ENCODE measurements at regions of chr18 and their contacts with region 1.

Region 1: DNA sequence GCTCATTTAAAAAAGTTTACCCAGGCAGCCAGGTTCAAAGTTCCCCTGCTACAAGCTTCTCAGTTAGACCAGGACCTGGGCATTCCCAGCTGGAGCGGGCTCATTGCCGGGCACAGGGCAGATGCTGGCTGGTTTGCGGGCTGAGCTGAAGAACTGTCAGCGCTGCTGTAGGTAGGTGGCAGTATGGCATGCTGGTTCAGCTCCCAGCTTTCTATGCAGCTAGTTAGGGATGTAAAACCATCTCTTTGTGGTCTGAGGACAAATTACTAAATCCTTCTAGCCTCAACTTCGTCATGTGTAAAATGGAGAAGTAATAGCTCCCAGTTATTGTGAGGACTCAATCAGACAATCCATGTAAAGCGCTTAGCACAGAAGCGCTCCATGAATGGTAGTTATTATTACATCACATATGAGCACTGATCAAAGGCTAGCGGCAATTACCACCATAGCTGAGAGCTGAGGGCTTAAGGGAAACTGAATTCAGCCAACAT is 2.4 kb upstream of the LDLRAD4 start:
- DNase-seq: peak; percentile 79
- ATAC-seq: peak; percentile 70
- H3K4me3 Mint-ChIP-seq: peak overlapping the region; percentile 77
- H3K27ac Mint-ChIP-seq: no peak overlapping the region
- H3K4me1 Mint-ChIP-seq: peaks cover 27% of the 10 kb centered on the region
- H3K27me3 Mint-ChIP-seq: peaks cover 15% of the 10 kb centered on the region

Region 2: DNA sequence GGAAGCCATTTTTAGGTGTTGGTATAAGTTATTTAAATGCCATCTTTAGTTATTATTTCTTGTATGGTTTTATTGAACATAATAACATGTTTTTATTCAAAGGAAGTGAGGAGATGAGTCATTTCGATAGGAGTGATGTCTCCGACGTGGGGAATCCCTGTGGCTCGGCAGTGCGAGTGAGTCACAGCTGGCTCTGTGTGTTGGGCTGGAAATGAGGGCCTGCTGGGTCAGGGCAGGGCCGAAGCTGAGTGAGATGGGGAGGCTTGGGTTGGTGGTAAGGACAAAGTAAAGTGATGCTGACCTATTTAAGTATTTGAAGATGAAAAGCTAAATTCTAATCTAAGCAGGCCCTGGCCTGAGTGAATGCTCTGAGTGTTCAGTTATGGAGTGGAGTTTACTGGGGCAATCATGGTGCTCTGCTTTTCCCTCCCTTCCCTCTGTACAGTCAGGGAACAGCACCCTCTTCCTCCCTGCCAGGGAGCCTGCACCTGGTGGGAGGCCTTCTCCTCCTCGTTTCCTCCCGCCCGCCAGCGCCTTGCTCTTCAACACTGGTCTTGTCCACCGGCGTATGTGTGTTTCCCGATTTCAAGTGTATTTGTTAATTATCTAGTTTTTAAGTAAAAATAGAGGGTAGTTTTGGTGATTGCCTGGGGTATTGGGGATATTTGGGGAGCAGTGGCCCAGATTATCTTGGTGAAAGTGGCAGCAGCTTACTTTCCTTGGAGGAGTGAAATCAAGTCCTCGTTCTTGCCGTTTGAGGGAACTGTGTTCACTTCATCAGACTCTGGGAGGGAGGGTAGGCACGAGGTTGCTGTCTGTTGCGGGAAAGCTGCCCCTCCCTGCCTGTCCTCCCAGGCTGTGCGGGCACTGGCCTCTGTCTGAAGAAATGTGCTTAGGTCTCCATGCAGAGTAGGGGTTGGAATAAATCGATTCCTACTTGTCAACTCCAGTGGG is 159.4 kb after region 1 on chr18:
- CTCF ChIA-PET with region 1: interaction called, 17 read pairs
- POLR2A ChIA-PET with region 1: interaction called, 7 read pairs
- intact Hi-C with region 1: loop called (anchors 1 to 2 kb)
- DNase-seq: peak; percentile 91
- ATAC-seq: peak; percentile 73
- H3K4me3 Mint-ChIP-seq: peak overlapping the region; percentile 63
- H3K27ac Mint-ChIP-seq: peak overlapping the region; percentile 97
- H3K4me1 Mint-ChIP-seq: peaks cover 84% of the 10 kb centered on the region
- H3K27me3 Mint-ChIP-seq: no peaks in the 10 kb centered on the region

Region 3: GRCh38 chr18:13401404-13401803 is 185.3 kb after region 1 on chr18:
- CTCF ChIA-PET with region 1: no interaction called
- POLR2A ChIA-PET with region 1: no interaction called
- intact Hi-C with region 1: no loop called
- DNase-seq: no peak
- ATAC-seq: no peak
- H3K4me3 Mint-ChIP-seq: no peak overlapping the region
- H3K27ac Mint-ChIP-seq: no peak overlapping the region
- H3K4me1 Mint-ChIP-seq: peaks cover 12% of the 10 kb centered on the region
- H3K27me3 Mint-ChIP-seq: no peaks in the 10 kb centered on the region

Region 4: GRCh38 chr18:13455960-13456471 is 239.9 kb after region 1 on chr18:
- CTCF ChIA-PET with region 1: interaction called, 3 read pairs
- POLR2A ChIA-PET with region 1: no interaction called
- intact Hi-C with region 1: loop called in 1 of 2 experiments (anchors 5 kb)
- DNase-seq: peak; percentile 73
- ATAC-seq: peak; percentile 83
- H3K4me3 Mint-ChIP-seq: peak overlapping the region; percentile 31
- H3K27ac Mint-ChIP-seq: peak overlapping the region; percentile 37
- H3K4me1 Mint-ChIP-seq: peaks cover 28% of the 10 kb centered on the region
- H3K27me3 Mint-ChIP-seq: no peaks in the 10 kb centered on the region

Region 5: GRCh38 chr18:13500869-13501542 is 284.9 kb after region 1 on chr18:
- CTCF ChIA-PET with region 1: interaction called, 11 read pairs
- POLR2A ChIA-PET with region 1: no interaction called
- intact Hi-C with region 1: loop called in 1 of 2 experiments (anchors 2 kb)
- DNase-seq: no peak
- ATAC-seq: no peak
- H3K4me3 Mint-ChIP-seq: no peak overlapping the region
- H3K27ac Mint-ChIP-seq: peak overlapping the region; percentile 51
- H3K4me1 Mint-ChIP-seq: peaks cover 41% of the 10 kb centered on the region
- H3K27me3 Mint-ChIP-seq: no peaks in the 10 kb centered on the region

Region 6: GRCh38 chr18:13558124-13558523 is 342.0 kb after region 1 on chr18:
- CTCF ChIA-PET with region 1: interaction called, 10 read pairs
- POLR2A ChIA-PET with region 1: no interaction called
- intact Hi-C with region 1: loop called in 1 of 2 experiments (anchors 5 kb)
- DNase-seq: peak; percentile 58
- ATAC-seq: peak; percentile 29
- H3K4me3 Mint-ChIP-seq: no peak overlapping the region
- H3K27ac Mint-ChIP-seq: no peak overlapping the region
- H3K4me1 Mint-ChIP-seq: peaks cover 41% of the 10 kb centered on the region
- H3K27me3 Mint-ChIP-seq: no peaks in the 10 kb centered on the region

Region 7: GRCh38 chr18:13629841-13630715 is 413.9 kb after region 1 on chr18:
- CTCF ChIA-PET with region 1: interaction called, 5 read pairs
- POLR2A ChIA-PET with region 1: no interaction called
- intact Hi-C with region 1: loop called (anchors 1 kb)
- DNase-seq: peak; percentile 69
- ATAC-seq: peak; percentile 98
- H3K4me3 Mint-ChIP-seq: no peak overlapping the region
- H3K27ac Mint-ChIP-seq: peak overlapping the region; percentile 52
- H3K4me1 Mint-ChIP-seq: peaks cover 4% of the 10 kb centered on the region
- H3K27me3 Mint-ChIP-seq: no peaks in the 10 kb centered on the region

Measured in activated CD4-positive, alpha-beta T cell treated with anti-CD3 and anti-CD28 coated beads for 36 hours (primary cell).